ENCODE measurements at regions of chr1 and their contacts with region 1.

Region 1: DNA sequence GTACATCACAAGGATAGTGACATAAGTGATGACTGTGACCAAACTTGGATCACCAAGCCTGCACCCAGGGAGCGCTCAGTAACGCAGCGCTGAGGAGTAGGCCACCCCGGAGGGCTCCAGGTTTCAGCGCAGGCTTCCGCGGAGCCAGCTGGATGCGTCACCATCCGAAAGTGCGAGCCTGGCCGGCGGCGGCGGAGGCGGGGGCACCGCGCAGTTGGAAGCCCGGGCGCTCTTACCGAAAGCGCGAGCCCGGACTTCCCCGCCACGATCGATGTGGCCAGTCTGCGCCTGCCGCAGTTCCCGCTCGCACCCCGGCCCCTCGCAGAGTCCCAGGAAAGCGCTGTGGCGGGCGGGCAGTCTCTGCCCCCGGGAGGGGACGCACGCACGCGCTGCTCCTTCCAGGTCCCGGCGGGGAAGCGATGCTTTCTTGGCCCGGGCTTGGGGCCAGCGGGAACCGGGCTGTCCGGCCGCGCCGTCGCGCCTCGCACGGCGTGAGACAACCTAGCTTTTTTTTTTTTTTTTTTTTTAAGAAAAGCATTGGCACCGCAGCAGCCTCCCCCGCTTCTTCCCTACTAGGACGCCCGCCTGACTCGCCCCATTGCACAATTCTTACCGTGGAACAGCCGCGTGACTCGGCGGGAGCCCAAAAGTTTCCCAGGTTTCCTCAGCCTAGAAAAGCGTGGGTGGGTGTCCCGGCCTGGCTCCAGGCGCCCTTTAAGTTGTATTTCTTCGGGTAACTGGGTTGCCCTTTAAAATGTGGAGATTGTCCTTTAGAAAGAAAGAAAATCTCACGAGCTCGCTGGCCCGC is 36.4 kb upstream of the JAK1 start:
- DNase-seq: peak; percentile 58 to 81 (median 67)
- ATAC-seq: peak; percentile 90
- H3K4me3 ChIP-seq: peak overlapping the region; percentile 56
- H3K4me3 Mint-ChIP-seq: peak overlapping the region; percentile 77 to 93 (median 86)
- H3K27ac ChIP-seq: peak overlapping the region; percentile 66
- H3K27ac Mint-ChIP-seq: peak overlapping the region; percentile 24 to 95 (median 82)
- H3K4me1 ChIP-seq: peaks cover 16 to 19% of the 10 kb centered on the region in 2 donors
- H3K4me1 Mint-ChIP-seq: peaks cover 8 to 44% (median 28%) of the 10 kb centered on the region in 7 donors
- H3K27me3 ChIP-seq: no peaks in the 10 kb centered on the region
- H3K27me3 Mint-ChIP-seq: peaks cover 0 to 33% (median 0%) of the 10 kb centered on the region in 5 donors

Region 2: GRCh38 chr1:64864018-64864940 is 138.4 kb before region 1 on chr1:
- CTCF ChIA-PET with region 1: no interaction called
- POLR2A ChIA-PET with region 1: no interaction called
- intact Hi-C with region 1: loop called in 1 of 2 experiments (anchors 1 kb)
- DNase-seq: peak in 8 of 9 donors; percentile 19 to 67 (median 50)
- ATAC-seq: peak; percentile 95
- H3K4me3 ChIP-seq: no peak overlapping the region
- H3K4me3 Mint-ChIP-seq: peak overlapping the region in 7 of 10 donors; percentile 3 to 65 (median 54)
- H3K27ac ChIP-seq: peak overlapping the region; percentile 29
- H3K27ac Mint-ChIP-seq: peak overlapping the region; percentile 26 to 93 (median 78)
- H3K4me1 ChIP-seq: peaks cover 15 to 29% of the 10 kb centered on the region in 2 donors
- H3K4me1 Mint-ChIP-seq: peaks cover 29 to 58% (median 39%) of the 10 kb centered on the region in 7 donors
- H3K27me3 ChIP-seq: no peaks in the 10 kb centered on the region
- H3K27me3 Mint-ChIP-seq: no peaks in the 10 kb centered on the region

Region 3: GRCh38 chr1:64877151-64877550 is 125.6 kb before region 1 on chr1:
- CTCF ChIA-PET with region 1: no interaction called
- POLR2A ChIA-PET with region 1: interaction called, 5 read pairs
- intact Hi-C with region 1: loop called in 1 of 2 experiments (anchors 1 kb)
- DNase-seq: peak in 7 of 9 donors; percentile 75 to 90 (median 87)
- ATAC-seq: peak; percentile 96
- H3K4me3 ChIP-seq: peak overlapping the region; percentile 8
- H3K4me3 Mint-ChIP-seq: peak overlapping the region; percentile 70 to 83 (median 76)
- H3K27ac ChIP-seq: peak overlapping the region; percentile 36
- H3K27ac Mint-ChIP-seq: peak overlapping the region; percentile 41 to 95 (median 90)
- H3K4me1 ChIP-seq: peaks cover 43 to 53% of the 10 kb centered on the region in 2 donors
- H3K4me1 Mint-ChIP-seq: peaks cover 38 to 88% (median 84%) of the 10 kb centered on the region in 7 donors
- H3K27me3 ChIP-seq: no peaks in the 10 kb centered on the region
- H3K27me3 Mint-ChIP-seq: no peaks in the 10 kb centered on the region

Region 4: DNA sequence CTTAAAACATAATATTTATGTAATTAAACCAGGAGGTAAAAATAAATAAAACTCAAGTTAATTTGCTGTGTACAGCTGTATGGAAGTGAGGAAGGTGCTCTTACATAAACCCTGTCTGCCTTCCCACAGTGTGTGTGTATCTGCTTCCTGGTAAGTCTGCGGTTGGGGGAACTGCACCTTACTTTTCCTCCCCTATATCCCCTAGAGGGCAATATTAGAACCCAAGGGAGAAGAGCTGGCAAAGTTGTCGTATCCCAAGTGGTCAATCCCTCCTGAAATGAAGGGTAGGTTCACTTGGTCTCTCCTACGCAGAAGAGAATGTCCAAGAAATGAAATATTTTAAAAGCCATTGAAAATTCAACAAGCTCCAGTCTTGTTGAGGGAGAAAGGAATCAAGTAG is 18.6 kb before region 1 on chr1:
- CTCF ChIA-PET with region 1: no interaction called
- POLR2A ChIA-PET with region 1: interaction called, 3 read pairs
- intact Hi-C with region 1: loop called in 1 of 2 experiments (anchors 2 kb)
- DNase-seq: no peak
- ATAC-seq: no peak
- H3K4me3 ChIP-seq: no peak overlapping the region
- H3K4me3 Mint-ChIP-seq: no peak overlapping the region
- H3K27ac ChIP-seq: no peak overlapping the region
- H3K27ac Mint-ChIP-seq: no peak overlapping the region
- H3K4me1 ChIP-seq: no peaks in the 10 kb centered on the region
- H3K4me1 Mint-ChIP-seq: peaks cover 0 to 25% (median 14%) of the 10 kb centered on the region in 7 donors
- H3K27me3 ChIP-seq: no peaks in the 10 kb centered on the region
- H3K27me3 Mint-ChIP-seq: peaks cover 0 to 9% (median 0%) of the 10 kb centered on the region in 5 donors

Region 5: GRCh38 chr1:65020774-65021173 is 18.1 kb after region 1 on chr1:
- CTCF ChIA-PET with region 1: no interaction called
- POLR2A ChIA-PET with region 1: no interaction called
- intact Hi-C with region 1: loop called in 1 of 2 experiments (anchors 2 kb)
- DNase-seq: no peak
- ATAC-seq: peak; percentile 56
- H3K4me3 ChIP-seq: no peak overlapping the region
- H3K4me3 Mint-ChIP-seq: no peak overlapping the region
- H3K27ac ChIP-seq: no peak overlapping the region
- H3K27ac Mint-ChIP-seq: peak overlapping the region in 1 of 9 donors; percentile 27
- H3K4me1 ChIP-seq: no peaks in the 10 kb centered on the region
- H3K4me1 Mint-ChIP-seq: peaks cover 0 to 10% (median 0%) of the 10 kb centered on the region in 7 donors
- H3K27me3 ChIP-seq: no peaks in the 10 kb centered on the region
- H3K27me3 Mint-ChIP-seq: peaks cover 0 to 16% (median 0%) of the 10 kb centered on the region in 5 donors

Region 6: GRCh38 chr1:65083263-65083896 is 80.7 kb after region 1 on chr1:
- CTCF ChIA-PET with region 1: no interaction called
- POLR2A ChIA-PET with region 1: no interaction called
- intact Hi-C with region 1: no loop called
- DNase-seq: no peak
- ATAC-seq: peak; percentile 58
- H3K4me3 ChIP-seq: no peak overlapping the region
- H3K4me3 Mint-ChIP-seq: no peak overlapping the region
- H3K27ac ChIP-seq: no peak overlapping the region
- H3K27ac Mint-ChIP-seq: no peak overlapping the region
- H3K4me1 ChIP-seq: no peaks in the 10 kb centered on the region
- H3K4me1 Mint-ChIP-seq: peaks cover 0 to 6% (median 0%) of the 10 kb centered on the region in 7 donors
- H3K27me3 ChIP-seq: no peaks in the 10 kb centered on the region
- H3K27me3 Mint-ChIP-seq: peaks cover 0 to 16% (median 4%) of the 10 kb centered on the region in 5 donors

Measured in naive thymus-derived CD4-positive, alpha-beta T cell (primary cell).